ENCODE measurements at regions of chr11 and their contacts with region 1.

Region 1: DNA sequence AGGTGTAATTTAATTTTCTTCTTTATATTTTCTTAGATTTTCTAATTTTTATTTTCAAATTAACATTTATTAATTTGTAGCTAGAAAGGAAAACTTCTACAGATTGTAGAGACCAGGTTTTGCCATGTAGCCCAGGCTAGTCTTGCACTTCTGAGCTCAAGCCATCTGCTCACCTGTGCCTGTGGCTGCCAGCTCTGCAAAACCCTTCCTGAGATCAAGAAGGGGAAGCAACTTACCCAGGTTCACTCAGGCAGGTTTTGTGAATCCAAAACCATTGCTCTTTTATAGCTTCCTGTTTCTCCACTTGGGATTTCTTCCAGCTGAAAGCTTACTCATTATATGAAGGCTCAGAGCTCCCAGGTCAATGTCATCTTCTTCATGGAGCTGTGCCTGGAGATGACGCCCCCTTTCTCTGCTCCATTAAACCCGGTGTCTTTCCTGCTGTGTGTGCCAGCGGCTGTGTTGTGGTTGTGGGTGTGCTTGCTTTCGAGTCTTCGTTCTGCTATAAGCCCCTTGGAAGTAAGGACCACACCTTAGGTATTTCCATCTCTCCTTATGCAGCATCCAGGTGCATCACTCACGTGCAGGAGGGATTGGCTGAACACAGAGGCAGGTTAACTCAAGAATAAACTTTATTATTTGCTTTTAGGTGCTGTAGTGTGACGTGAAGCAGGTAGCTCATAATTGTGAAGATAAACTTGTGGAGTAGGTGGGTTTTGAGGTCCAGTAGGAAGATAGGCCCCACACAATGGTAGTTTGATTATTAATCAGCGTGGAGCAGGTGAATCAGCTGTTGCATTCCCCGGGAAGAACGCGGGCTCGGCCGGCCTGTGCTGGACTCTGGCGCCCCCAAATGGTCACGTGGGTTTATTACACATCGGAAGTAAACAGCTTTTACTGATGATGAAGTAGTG is 42.2 kb upstream of the INCENP start:
- DNase-seq: peak; percentile 64 to 80 (median 70)
- H3K4me3 ChIP-seq: peak overlapping the region; percentile 27
- H3K4me3 Mint-ChIP-seq: peak overlapping the region in 6 of 7 donors; percentile 18 to 73 (median 49)
- H3K27ac ChIP-seq: no peak overlapping the region
- H3K27ac Mint-ChIP-seq: peak overlapping the region in 6 of 8 donors; percentile 1 to 74 (median 38)
- H3K4me1 ChIP-seq: peaks cover 4% of the 10 kb centered on the region
- H3K4me1 Mint-ChIP-seq: peaks cover 6 to 9% (median 8%) of the 10 kb centered on the region in 3 donors
- H3K27me3 ChIP-seq: no peaks in the 10 kb centered on the region
- H3K27me3 Mint-ChIP-seq: peaks cover 1 to 2% of the 10 kb centered on the region in 2 donors

Region 2: GRCh38 chr11:61792310-61793085 is 289.1 kb before region 1 on chr11 and contains the starts of genes FEN1 and TMEM258:
- CTCF ChIA-PET with region 1: interaction called, 62 read pairs
- POLR2A ChIA-PET with region 1: no interaction called
- DNase-seq: peak; percentile 80 to 91 (median 85)
- H3K4me3 ChIP-seq: peak within 1 kb of the TSS; percentile 92
- H3K4me3 Mint-ChIP-seq: peak within 1 kb of the TSS; percentile 91 to 100 (median 92)
- H3K27ac ChIP-seq: peak within 1 kb of the TSS; percentile 94
- H3K27ac Mint-ChIP-seq: peak within 1 kb of the TSS; percentile 96 to 100 (median 99)
- H3K4me1 ChIP-seq: peaks cover 17% of the 10 kb centered on the region
- H3K4me1 Mint-ChIP-seq: peaks cover 24 to 49% (median 36%) of the 10 kb centered on the region in 3 donors
- H3K27me3 ChIP-seq: no peaks in the 10 kb centered on the region
- H3K27me3 Mint-ChIP-seq: no peaks in the 10 kb centered on the region
- total RNA-seq, gene FEN1: 112 to 121 TPM
- total RNA-seq, gene TMEM258: 148 to 152 TPM

Region 3: GRCh38 chr11:61881397-61881796 is 200.2 kb before region 1 on chr11:
- CTCF ChIA-PET with region 1: interaction called, 10 read pairs
- POLR2A ChIA-PET with region 1: no interaction called
- DNase-seq: no peak
- H3K4me3 ChIP-seq: no peak overlapping the region
- H3K4me3 Mint-ChIP-seq: no peak overlapping the region
- H3K27ac ChIP-seq: no peak overlapping the region
- H3K27ac Mint-ChIP-seq: peak overlapping the region in 2 of 8 donors; percentile 7 to 38
- H3K4me1 ChIP-seq: no peaks in the 10 kb centered on the region
- H3K4me1 Mint-ChIP-seq: no peaks in the 10 kb centered on the region
- H3K27me3 ChIP-seq: no peaks in the 10 kb centered on the region
- H3K27me3 Mint-ChIP-seq: no peaks in the 10 kb centered on the region

Region 4: GRCh38 chr11:61899146-61899841 is 182.3 kb before region 1 on chr11:
- CTCF ChIA-PET with region 1: interaction called, 232 read pairs
- POLR2A ChIA-PET with region 1: interaction called, 3 read pairs
- DNase-seq: peak; percentile 86 to 93 (median 87)
- H3K4me3 ChIP-seq: no peak overlapping the region
- H3K4me3 Mint-ChIP-seq: peak overlapping the region in 1 of 7 donors; percentile 5
- H3K27ac ChIP-seq: no peak overlapping the region
- H3K27ac Mint-ChIP-seq: peak overlapping the region in 7 of 8 donors; percentile 3 to 98 (median 44)
- H3K4me1 ChIP-seq: no peaks in the 10 kb centered on the region
- H3K4me1 Mint-ChIP-seq: peaks cover 5 to 11% (median 6%) of the 10 kb centered on the region in 3 donors
- H3K27me3 ChIP-seq: no peaks in the 10 kb centered on the region
- H3K27me3 Mint-ChIP-seq: peaks cover 0 to 4% of the 10 kb centered on the region in 2 donors

Region 5: GRCh38 chr11:61947486-61948210 is 134.0 kb before region 1 on chr11:
- CTCF ChIA-PET with region 1: interaction called, 45 read pairs
- POLR2A ChIA-PET with region 1: no interaction called
- DNase-seq: peak; percentile 44 to 71 (median 46)
- H3K4me3 ChIP-seq: no peak overlapping the region
- H3K4me3 Mint-ChIP-seq: no peak overlapping the region
- H3K27ac ChIP-seq: no peak overlapping the region
- H3K27ac Mint-ChIP-seq: peak overlapping the region in 1 of 8 donors; percentile 38
- H3K4me1 ChIP-seq: no peaks in the 10 kb centered on the region
- H3K4me1 Mint-ChIP-seq: no peaks in the 10 kb centered on the region
- H3K27me3 ChIP-seq: no peaks in the 10 kb centered on the region
- H3K27me3 Mint-ChIP-seq: peaks cover 4 to 14% of the 10 kb centered on the region in 2 donors

Region 6: DNA sequence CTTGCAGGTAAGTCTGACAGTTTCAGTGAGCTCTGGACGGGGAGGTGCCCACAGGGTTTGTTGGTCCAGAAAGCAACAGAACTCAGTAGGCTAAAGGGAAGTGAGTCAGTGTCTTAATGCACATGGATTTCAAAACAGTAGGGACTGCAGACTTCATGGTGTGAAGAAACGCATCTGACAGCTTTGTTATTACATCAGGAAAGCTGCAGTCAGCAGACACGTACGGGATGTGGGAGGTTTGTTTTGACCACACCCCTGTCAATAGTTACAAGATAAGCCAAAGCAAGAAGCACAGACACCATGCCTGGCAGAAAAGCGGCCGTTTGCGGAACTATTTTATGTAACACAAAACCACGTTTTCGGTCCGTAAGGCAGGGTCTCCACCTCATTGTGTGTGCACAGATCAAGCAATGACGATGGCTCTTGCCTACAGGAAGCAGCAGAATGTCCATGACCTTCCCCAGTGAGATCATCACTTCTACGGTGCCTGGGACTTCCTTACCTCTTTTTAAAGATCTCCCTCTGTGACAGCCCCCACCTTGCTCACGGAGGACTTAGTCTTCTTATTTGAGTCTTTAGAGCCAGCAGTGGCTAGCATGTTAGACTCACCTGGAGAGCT is 56.0 kb before region 1 on chr11:
- CTCF ChIA-PET with region 1: interaction called, 13 read pairs
- POLR2A ChIA-PET with region 1: interaction called, 4 read pairs
- DNase-seq: peak; percentile 64 to 93 (median 91)
- H3K4me3 ChIP-seq: peak overlapping the region; percentile 26
- H3K4me3 Mint-ChIP-seq: peak overlapping the region; percentile 9 to 83 (median 74)
- H3K27ac ChIP-seq: peak overlapping the region; percentile 78
- H3K27ac Mint-ChIP-seq: peak overlapping the region; percentile 92 to 100 (median 99)
- H3K4me1 ChIP-seq: peaks cover 20% of the 10 kb centered on the region
- H3K4me1 Mint-ChIP-seq: peaks cover 18 to 25% (median 24%) of the 10 kb centered on the region in 3 donors
- H3K27me3 ChIP-seq: no peaks in the 10 kb centered on the region
- H3K27me3 Mint-ChIP-seq: peaks cover 5 to 6% of the 10 kb centered on the region in 2 donors

Region 7: GRCh38 chr11:62108017-62108750 is 26.5 kb after region 1 on chr11:
- CTCF ChIA-PET with region 1: interaction called, 40 read pairs
- POLR2A ChIA-PET with region 1: no interaction called
- DNase-seq: peak in 3 of 5 donors; percentile 21 to 69 (median 52)
- H3K4me3 ChIP-seq: no peak overlapping the region
- H3K4me3 Mint-ChIP-seq: peak overlapping the region in 1 of 7 donors; percentile 9
- H3K27ac ChIP-seq: no peak overlapping the region
- H3K27ac Mint-ChIP-seq: no peak overlapping the region
- H3K4me1 ChIP-seq: peaks cover 14% of the 10 kb centered on the region
- H3K4me1 Mint-ChIP-seq: peaks cover 12 to 16% (median 16%) of the 10 kb centered on the region in 3 donors
- H3K27me3 ChIP-seq: no peaks in the 10 kb centered on the region
- H3K27me3 Mint-ChIP-seq: peaks cover 2 to 5% of the 10 kb centered on the region in 2 donors